ENCODE measurements at regions of chr6 and their contacts with region 1.

Region 1: DNA sequence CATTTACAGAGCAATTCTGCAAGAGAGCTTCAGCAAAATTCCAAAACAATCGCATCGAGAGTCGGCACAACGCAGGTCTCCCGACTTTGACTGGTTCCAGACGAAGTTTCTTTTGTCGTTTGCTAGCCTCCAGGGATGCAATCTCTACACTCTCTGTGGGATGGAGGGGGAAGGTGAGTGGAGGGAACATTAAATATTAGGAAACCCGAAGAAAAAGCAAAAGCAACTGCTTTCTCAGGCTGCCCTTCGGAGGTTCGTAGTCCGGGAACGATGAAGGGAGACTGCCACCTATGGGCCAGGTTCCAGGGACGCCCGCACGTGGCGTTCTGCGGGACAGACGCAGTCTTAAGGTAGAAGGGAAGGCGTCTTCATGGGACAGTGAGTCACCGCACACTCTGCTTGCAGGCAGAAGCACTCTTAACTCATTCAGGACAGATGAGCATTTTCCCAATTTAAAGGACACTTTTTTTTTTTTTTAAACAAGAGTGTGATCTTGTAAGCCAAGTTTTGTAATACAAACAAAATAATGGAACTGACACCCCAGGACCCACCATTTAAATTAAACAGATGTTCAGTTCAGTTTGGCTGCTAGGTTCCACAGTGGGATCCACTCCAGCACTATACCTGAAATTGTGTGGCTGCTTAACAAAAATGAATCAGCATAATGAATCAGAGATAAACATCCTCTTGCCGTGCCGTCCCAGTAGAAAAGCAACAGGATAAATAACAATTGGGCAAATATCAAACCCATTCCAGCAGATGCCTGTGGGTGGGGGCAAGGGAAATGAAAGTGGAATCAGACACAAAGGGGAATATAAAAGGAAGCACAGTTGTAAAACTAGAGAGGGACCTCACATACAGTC is 65.8 kb upstream of the ARMC2 start:
- DNase-seq: peak; percentile 78 to 91 (median 85)
- ATAC-seq: peak; percentile 96 to 99 (median 98)
- H3K4me3 ChIP-seq: peak overlapping the region in 3 of 4 donors; percentile 20 to 45 (median 36)
- H3K27ac ChIP-seq: peak overlapping the region in 2 of 4 donors; percentile 46 to 56
- H3K4me1 ChIP-seq: peaks cover 0 to 15% (median 0%) of the 10 kb centered on the region in 3 donors
- H3K27me3 ChIP-seq: no peaks in the 10 kb centered on the region
- CTCF ChIP-seq: peak; percentile 39 to 85 (median 67)

Region 2: GRCh38 chr6:108348655-108349349 is 433.6 kb before region 1 on chr6:
- intact Hi-C with region 1: no loop called
- DNase-seq: no peak
- ATAC-seq: no peak
- H3K4me3 ChIP-seq: no peak overlapping the region
- H3K27ac ChIP-seq: no peak overlapping the region
- H3K4me1 ChIP-seq: peaks cover 4 to 10% (median 8%) of the 10 kb centered on the region in 3 donors
- H3K27me3 ChIP-seq: no peaks in the 10 kb centered on the region
- CTCF ChIP-seq: no peak

Region 3: GRCh38 chr6:108476847-108477430 is 305.5 kb before region 1 on chr6:
- intact Hi-C with region 1: no loop called
- DNase-seq: no peak
- ATAC-seq: no peak
- H3K4me3 ChIP-seq: no peak overlapping the region
- H3K27ac ChIP-seq: no peak overlapping the region
- H3K4me1 ChIP-seq: no peaks in the 10 kb centered on the region
- H3K27me3 ChIP-seq: no peaks in the 10 kb centered on the region
- CTCF ChIP-seq: no peak

Region 4: DNA sequence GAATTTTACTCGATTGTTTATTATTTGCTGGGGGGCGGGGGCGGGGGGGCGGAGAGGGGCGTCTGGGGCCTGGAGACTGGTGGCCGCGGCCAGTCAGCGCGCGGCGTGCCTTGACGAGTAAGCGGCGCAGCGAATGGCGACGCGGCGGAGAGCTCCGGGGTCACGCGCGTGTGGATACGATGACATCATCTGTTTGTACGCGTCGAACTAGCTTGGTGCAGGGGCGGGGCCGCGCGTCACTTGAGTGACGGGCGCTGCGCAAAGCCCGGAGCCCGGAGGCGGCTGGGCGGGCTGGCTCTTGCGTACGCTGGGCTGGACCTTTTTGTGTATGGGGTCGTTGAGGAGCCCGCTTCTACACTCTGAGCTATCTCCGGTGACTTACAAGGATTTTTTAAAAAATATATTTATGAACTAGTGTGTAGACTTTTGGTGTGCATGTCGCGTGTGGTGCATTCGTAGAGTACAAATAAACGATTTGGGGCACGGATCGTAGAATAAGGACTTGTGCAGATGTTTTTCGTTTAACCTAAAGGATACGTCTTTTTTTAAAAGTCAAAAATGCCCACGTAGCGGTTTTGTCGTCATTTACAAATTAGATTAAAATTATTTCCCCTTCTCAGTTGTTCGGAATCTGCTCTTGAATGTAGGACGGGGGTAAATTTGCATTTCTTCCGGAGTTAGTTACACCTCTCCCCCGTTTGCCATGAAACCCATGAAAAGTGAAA is 223.9 kb before region 1 on chr6:
- intact Hi-C with region 1: loop called in 2 of 3 experiments (anchors 10 kb)
- DNase-seq: peak; percentile 96 to 99 (median 98)
- ATAC-seq: peak; percentile 65 to 77 (median 68)
- H3K4me3 ChIP-seq: peak overlapping the region; percentile 66 to 97 (median 96)
- H3K27ac ChIP-seq: peak overlapping the region; percentile 84 to 99 (median 96)
- H3K4me1 ChIP-seq: peaks cover 0 to 12% (median 6%) of the 10 kb centered on the region in 3 donors
- H3K27me3 ChIP-seq: no peaks in the 10 kb centered on the region
- CTCF ChIP-seq: no peak

Region 5: GRCh38 chr6:109103942-109104341 is 321.5 kb after region 1 on chr6:
- intact Hi-C with region 1: no loop called
- DNase-seq: no peak
- ATAC-seq: no peak
- H3K4me3 ChIP-seq: no peak overlapping the region
- H3K27ac ChIP-seq: no peak overlapping the region
- H3K4me1 ChIP-seq: no peaks in the 10 kb centered on the region
- H3K27me3 ChIP-seq: no peaks in the 10 kb centered on the region
- CTCF ChIP-seq: no peak

Region 6: DNA sequence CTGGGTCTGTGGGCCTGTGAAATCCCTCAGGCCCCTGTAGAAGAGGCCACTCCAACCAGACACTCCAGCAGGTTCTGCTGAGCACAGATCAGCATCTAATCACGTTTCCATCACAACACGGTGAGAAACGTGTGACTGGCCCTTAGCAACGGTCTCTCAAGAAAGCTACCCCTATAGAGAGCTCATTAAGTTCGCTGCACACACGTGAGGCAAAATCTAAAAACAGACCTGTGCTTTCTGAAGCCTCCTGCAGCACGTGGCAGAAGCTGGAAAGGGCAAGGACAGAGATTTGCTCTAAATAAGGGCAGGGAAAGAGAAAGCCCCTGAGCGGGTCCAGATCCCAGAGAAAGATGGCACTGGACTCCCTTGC is 1252.2 kb after region 1 on chr6:
- intact Hi-C with region 1: no loop called
- DNase-seq: no peak
- ATAC-seq: no peak
- H3K4me3 ChIP-seq: no peak overlapping the region
- H3K27ac ChIP-seq: no peak overlapping the region
- H3K4me1 ChIP-seq: no peaks in the 10 kb centered on the region
- H3K27me3 ChIP-seq: no peaks in the 10 kb centered on the region
- CTCF ChIP-seq: no peak